Aorta (tissue), 5 donors: ENCODE measurements at regions of chr16 and their contacts with region 1.

Region 1: DNA sequence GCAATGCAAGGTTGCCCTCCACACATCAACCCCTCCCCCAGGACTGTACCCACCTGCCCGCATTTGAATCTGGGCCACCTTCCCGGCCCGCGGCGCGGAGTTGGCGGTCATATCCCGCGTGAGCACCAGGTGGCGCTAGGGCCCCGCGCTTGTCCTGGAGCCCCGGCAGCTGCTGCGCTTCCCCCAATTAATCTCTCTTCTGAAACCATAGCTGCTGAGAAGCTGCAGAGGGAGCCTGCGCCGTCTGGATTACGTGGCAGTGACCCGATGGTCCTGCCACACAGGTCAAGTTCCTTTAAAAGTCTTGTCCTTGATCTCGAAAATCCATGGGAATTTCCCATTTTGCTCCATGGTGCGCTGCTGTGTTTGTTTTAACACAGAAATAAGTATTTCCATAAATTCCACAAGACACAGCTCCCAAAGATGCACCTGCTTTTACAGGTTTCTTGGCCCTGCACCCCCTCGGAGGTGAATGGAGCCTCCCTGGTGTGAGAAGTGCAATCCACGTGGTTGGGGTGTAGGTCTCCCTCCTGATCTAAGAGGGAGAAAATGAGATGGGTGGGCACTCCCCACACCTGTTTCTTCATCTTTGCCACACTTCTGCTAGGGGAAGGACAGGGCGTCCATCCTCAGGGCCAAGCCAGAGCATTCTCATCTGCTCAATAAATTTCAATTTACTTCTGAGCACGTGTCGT is 22.1 kb downstream of the COX4I1 start:
- DNase-seq: peak; percentile 84 to 93
- ATAC-seq: peak; percentile 91
- H3K4me3 ChIP-seq: no peak overlapping the region
- H3K27ac ChIP-seq: no peak overlapping the region
- H3K4me1 ChIP-seq: no peaks in the 10 kb centered on the region
- H3K27me3 ChIP-seq: no peaks in the 10 kb centered on the region

Region 2: DNA sequence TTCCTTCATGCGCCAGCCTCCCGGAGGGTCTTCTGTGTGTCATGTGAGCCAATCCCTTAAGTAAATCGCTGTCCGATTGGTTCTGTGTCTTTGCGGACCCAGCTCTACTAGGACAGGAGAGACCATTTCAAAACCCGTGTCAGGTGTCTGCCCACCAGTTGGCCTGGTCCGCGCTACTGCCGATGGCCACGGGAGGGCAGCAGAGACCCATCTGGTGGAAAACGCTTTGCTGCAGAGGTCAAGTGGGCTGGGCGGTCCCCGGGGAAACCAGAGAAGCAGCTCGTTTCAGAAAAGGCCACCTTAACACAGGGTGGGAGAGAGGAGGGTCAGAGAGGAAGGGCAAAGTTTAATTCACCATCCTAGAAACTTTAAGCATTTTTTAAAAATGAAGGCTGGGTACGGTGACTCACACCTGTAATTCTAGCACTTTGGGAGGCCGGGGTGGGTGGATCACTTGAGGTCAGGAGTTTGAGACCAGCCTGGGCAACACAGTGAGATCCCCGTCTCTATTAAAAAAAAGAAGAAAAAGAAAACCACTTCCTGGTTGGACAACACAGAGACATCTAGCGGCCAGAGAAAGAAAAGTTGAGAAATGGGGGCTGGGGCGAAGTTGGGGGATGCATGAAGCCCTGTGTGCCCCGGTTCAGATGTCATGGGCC is 706.5 kb before region 1 on chr16:
- intact Hi-C with region 1: no loop called
- DNase-seq: peak; percentile 93 to 97
- ATAC-seq: peak; percentile 92
- H3K4me3 ChIP-seq: no peak overlapping the region
- H3K27ac ChIP-seq: no peak overlapping the region
- H3K4me1 ChIP-seq: no peaks in the 10 kb centered on the region
- H3K27me3 ChIP-seq: no peaks in the 10 kb centered on the region

Region 3: GRCh38 chr16:85728879-85729278 is 92.7 kb before region 1 on chr16:
- intact Hi-C with region 1: no loop called
- DNase-seq: no peak
- ATAC-seq: no peak
- H3K4me3 ChIP-seq: no peak overlapping the region
- H3K27ac ChIP-seq: no peak overlapping the region
- H3K4me1 ChIP-seq: no peaks in the 10 kb centered on the region
- H3K27me3 ChIP-seq: no peaks in the 10 kb centered on the region

Region 4: DNA sequence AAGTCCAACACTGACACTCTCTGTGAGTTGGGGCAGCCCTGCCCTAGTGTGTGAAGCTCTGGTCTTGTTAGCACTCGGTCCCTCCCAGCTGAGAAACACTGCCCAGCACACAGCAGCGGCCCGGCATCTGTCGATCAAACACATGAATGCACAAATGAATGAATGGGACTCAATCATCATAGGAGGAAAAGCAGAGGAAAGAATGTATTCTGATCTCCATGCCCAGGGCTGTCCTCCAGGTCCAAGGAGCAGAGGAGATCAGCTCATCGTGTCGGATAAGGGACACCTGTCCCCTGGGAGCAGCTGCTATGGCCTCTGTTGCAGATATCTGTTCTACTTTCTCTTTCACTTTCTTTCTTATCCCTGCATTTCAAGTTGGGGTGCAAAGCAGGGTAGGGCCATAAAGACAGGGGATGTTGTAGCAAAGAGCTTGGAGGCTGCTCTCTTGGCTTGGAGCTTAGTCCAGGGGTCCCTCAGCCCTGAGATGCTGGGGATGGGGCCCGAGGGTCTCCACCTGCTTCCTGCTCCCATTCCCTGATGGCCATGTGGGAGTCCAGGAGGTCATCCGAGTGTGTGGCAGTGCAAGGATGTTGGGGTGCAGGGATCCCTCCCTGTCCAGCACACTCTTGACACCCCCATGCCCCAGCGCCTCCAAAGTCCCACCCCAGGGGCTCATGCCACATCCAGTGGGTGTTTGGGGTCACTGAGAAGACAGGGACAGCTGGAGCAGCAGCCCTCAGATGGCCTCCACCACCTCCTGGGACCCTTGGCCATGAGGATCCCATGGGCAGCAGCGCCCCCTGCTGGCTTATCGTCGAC is 165.6 kb after region 1 on chr16:
- intact Hi-C with region 1: loop called in 1 of 2 experiments (anchors 10 kb)
- DNase-seq: peak in 1 of 2 donors; percentile 77
- ATAC-seq: no peak
- H3K4me3 ChIP-seq: no peak overlapping the region
- H3K27ac ChIP-seq: no peak overlapping the region
- H3K4me1 ChIP-seq: no peaks in the 10 kb centered on the region
- H3K27me3 ChIP-seq: no peaks in the 10 kb centered on the region

Region 5: DNA sequence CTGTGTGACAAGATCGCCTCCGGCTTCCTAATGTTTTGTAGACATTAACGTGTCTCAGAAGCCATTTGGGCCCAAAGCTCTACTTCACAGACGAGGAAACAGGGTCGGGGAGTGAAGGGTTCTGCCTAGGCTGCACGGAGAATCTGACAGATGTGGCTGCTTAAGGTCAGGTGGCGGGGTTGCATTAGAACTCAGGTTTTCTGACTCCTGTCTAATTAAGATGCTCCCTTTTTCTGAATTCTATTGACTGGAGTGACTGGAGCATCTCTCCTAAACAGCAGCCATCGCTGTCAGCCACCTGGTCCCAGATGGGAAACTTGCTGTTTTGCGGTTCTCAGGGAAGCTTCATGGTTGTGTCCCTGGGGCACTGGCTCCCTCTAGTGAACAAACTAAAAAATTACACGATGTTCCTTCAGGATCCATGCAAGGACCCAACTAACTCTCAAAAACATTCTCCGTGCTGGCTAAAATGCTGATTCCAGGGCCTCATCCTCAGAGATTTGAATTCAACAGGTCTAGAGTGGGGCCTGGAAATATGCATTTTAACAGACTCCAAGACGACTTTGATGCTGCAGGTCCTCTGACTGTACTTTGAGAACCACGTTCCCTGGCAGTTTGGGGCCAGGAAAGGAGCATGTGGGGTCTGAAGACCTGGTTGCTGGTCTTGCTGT is 194.7 kb after region 1 on chr16:
- intact Hi-C with region 1: loop called (anchors 1 to 2 kb)
- DNase-seq: peak in 1 of 2 donors; percentile 35
- ATAC-seq: no peak
- H3K4me3 ChIP-seq: no peak overlapping the region
- H3K27ac ChIP-seq: no peak overlapping the region
- H3K4me1 ChIP-seq: no peaks in the 10 kb centered on the region
- H3K27me3 ChIP-seq: no peaks in the 10 kb centered on the region

Region 6: GRCh38 chr16:86519649-86520316 is 698.2 kb after region 1 on chr16:
- intact Hi-C with region 1: loop called in 1 of 2 experiments (anchors 5 kb)
- DNase-seq: peak in 1 of 2 donors; percentile 90
- ATAC-seq: no peak
- H3K4me3 ChIP-seq: no peak overlapping the region
- H3K27ac ChIP-seq: no peak overlapping the region
- H3K4me1 ChIP-seq: no peaks in the 10 kb centered on the region
- H3K27me3 ChIP-seq: no peaks in the 10 kb centered on the region